MCF 10A (cell line): ENCODE measurements at regions of chrX and their contacts with region 1.

Region 1: GRCh38 chrX:118345401-118346257 is at the start of gene WDR44:
- DNase-seq: peak; percentile 95
- H3K4me3 Mint-ChIP-seq: peak within 1 kb of the TSS; percentile 98
- H3K27ac Mint-ChIP-seq: peak within 1 kb of the TSS; percentile 98
- H3K4me1 Mint-ChIP-seq: peaks cover 11% of the 10 kb centered on the region
- H3K27me3 Mint-ChIP-seq: no peaks in the 10 kb centered on the region
- CTCF ChIP-seq: no peak
- total RNA-seq, gene WDR44: 13.2 and 14.1 TPM in 2 replicates

Region 2: GRCh38 chrX:118437283-118437682 is 91.7 kb after region 1 on chrX:
- CTCF ChIA-PET with region 1: no interaction called
- POLR2A ChIA-PET with region 1: no interaction called
- intact Hi-C with region 1: loop called (anchors 10 kb)
- DNase-seq: no peak
- H3K4me3 Mint-ChIP-seq: no peak overlapping the region
- H3K27ac Mint-ChIP-seq: no peak overlapping the region
- H3K4me1 Mint-ChIP-seq: no peaks in the 10 kb centered on the region
- H3K27me3 Mint-ChIP-seq: no peaks in the 10 kb centered on the region
- CTCF ChIP-seq: no peak